Heart right ventricle (tissue), 16 donors: ENCODE measurements at regions of chr18 and their contacts with region 1.

Region 1: DNA sequence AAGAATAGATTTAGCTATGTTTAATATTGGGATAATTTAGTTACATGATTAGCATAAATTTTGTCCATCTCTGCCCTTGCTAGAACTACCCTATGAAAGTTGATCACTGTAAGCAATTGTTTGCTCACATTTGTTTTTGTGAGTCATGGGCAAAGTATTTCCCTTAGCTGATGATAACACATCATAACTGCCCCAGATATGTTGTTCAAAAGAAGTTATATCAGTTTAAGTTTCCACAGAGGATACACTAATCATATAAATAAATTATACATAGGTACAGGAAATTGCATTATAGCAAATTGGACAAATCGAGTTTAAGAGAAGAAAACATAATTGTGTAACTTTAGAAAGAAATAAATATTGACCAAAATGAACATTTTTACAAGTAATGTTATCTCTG is 223.1 kb upstream of the PIK3C3 start:
- DNase-seq: no peak
- ATAC-seq: no peak
- H3K4me3 ChIP-seq: no peak overlapping the region
- H3K27ac ChIP-seq: no peak overlapping the region
- H3K4me1 ChIP-seq: no peaks in the 10 kb centered on the region
- H3K27me3 ChIP-seq: no peaks in the 10 kb centered on the region
- CTCF ChIP-seq: no peak

Region 2: GRCh38 chr18:41604964-41605363 is 126.9 kb before region 1 on chr18:
- intact Hi-C with region 1: no loop called
- DNase-seq: no peak
- ATAC-seq: peak in 2 of 8 donors; percentile 24 to 46
- H3K4me3 ChIP-seq: no peak overlapping the region
- H3K27ac ChIP-seq: no peak overlapping the region
- H3K4me1 ChIP-seq: no peaks in the 10 kb centered on the region
- H3K27me3 ChIP-seq: no peaks in the 10 kb centered on the region
- CTCF ChIP-seq: no peak

Region 3: DNA sequence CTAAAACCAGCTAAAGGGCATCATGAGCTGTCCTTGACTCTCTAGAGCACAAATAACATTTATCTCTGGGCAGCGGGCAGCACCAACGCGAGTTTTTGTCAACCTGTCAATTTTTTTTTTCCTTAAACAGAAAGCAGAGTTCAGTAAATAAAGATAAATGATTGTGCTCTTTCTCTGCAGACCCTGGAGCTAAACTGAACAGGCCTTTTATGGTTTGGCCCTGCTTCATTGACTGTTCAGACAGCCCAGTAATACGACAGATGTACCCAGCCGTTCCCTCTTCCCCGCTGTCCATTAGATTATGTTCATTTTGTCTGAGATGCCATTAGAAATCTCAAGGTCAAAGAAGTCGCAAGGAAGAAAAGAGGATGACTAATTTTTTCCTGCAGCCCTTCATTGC is 57.4 kb before region 1 on chr18:
- intact Hi-C with region 1: loop called in 1 of 10 experiments (anchors 10 kb)
- DNase-seq: no peak
- ATAC-seq: no peak
- H3K4me3 ChIP-seq: no peak overlapping the region
- H3K27ac ChIP-seq: no peak overlapping the region
- H3K4me1 ChIP-seq: no peaks in the 10 kb centered on the region
- H3K27me3 ChIP-seq: no peaks in the 10 kb centered on the region
- CTCF ChIP-seq: no peak

Region 4: DNA sequence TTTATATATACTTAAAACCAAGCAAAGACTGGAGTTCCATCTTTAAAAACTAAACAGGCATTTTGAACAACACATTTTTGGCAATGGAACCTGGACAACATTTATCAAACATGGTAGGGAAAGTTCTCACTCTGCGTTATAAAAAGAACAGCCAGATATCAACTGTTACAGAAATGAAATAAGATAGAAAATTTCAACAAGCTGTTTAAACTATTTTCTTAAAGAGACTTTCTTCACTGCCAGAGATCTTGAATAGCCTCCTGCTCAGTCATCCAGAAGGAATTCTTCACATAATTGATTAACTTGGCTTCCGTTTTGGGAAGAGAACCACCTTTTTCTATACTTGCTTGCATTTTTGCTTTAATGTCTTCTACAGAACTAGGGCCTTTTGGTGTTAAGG is 57.1 kb after region 1 on chr18:
- intact Hi-C with region 1: no loop called
- DNase-seq: no peak
- ATAC-seq: no peak
- H3K4me3 ChIP-seq: no peak overlapping the region
- H3K27ac ChIP-seq: no peak overlapping the region
- H3K4me1 ChIP-seq: no peaks in the 10 kb centered on the region
- H3K27me3 ChIP-seq: no peaks in the 10 kb centered on the region
- CTCF ChIP-seq: no peak

Region 5: DNA sequence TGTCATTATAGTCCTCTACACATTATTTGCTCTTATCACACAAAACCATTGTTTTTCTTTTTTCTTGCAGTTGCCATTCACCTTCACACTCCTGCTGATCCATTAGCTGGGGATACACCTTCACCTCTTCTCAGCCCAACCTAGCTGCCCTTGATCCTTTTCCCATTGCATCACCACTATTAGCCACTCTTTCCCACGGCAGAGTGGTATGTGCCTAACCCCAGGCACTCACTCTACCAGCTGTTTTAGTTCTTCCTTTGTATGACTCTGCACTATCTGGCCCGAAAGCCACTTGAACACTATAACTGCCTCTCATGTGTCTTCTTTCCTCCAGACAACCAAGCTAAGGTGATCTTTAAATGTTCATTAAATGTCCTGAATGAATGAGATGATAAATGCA is 77.8 kb after region 1 on chr18:
- intact Hi-C with region 1: no loop called
- DNase-seq: no peak
- ATAC-seq: no peak
- H3K4me3 ChIP-seq: no peak overlapping the region
- H3K27ac ChIP-seq: no peak overlapping the region
- H3K4me1 ChIP-seq: no peaks in the 10 kb centered on the region
- H3K27me3 ChIP-seq: peaks cover 0 to 9% (median 0%) of the 10 kb centered on the region in 7 donors
- CTCF ChIP-seq: no peak

Region 6: GRCh38 chr18:41982942-41983660 is 251.2 kb after region 1 on chr18:
- intact Hi-C with region 1: no loop called
- DNase-seq: no peak
- ATAC-seq: no peak
- H3K4me3 ChIP-seq: no peak overlapping the region
- H3K27ac ChIP-seq: no peak overlapping the region
- H3K4me1 ChIP-seq: peaks cover 0 to 6% (median 0%) of the 10 kb centered on the region in 9 donors
- H3K27me3 ChIP-seq: no peaks in the 10 kb centered on the region
- CTCF ChIP-seq: no peak